ENCODE measurements at regions of chr2 and their contacts with region 1.

Region 1: DNA sequence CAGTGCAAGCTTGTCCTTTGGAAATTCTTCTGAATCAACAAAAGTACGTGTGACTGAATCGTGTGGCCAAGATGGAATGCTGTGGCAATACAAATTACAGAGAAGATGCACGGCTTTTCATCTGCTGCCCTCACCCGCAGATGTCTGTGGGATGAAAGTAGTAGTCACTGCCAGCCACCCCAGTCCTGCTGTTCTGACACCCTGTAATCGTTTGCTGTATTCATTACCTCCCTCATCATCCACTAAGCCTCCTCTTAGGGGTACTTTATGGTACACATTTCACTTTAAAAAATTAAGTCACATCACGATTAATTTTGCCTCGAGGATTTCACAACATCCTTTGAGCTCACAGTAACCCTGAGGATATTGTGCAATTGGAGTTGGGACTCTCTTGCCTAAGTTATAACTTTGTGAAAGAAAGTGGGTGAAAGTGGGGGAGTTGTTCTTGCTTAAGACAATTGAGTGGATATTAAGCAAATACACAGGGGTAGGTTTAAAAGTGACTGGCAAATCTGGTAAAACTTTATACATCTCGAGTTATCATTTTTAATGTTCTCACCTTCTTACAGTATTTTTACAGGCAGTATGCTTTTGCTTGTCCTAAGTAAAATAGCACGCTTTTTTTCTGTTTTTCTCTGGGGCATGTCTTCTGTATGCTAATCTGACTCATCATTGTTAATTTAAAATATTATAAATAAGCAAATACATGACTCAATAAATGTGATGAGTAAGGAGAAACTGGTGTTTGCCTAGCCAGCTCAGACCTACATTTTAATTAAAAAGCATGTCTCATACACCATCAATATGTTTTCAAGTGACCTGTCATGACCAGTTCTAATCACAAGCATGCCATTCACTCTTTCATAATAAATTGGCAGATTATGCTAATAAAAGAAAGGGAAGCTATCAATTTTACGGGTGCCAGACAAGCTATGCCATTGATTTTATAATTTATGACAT is 680.9 kb downstream of the IRS1 start:
- DNase-seq: peak; percentile 68
- H3K4me3 ChIP-seq: peak overlapping the region; percentile 33
- H3K27ac ChIP-seq: peak overlapping the region; percentile 78
- H3K27me3 ChIP-seq: no peaks in the 10 kb centered on the region
- CTCF ChIP-seq: no peak

Region 2: GRCh38 chr2:225889446-225889850 is 229.3 kb before region 1 on chr2:
- CTCF ChIA-PET with region 1: interaction called, 11 read pairs
- POLR2A ChIA-PET with region 1: no interaction called
- DNase-seq: peak; percentile 74
- H3K4me3 ChIP-seq: no peak overlapping the region
- H3K27ac ChIP-seq: no peak overlapping the region
- H3K27me3 ChIP-seq: no peaks in the 10 kb centered on the region
- CTCF ChIP-seq: peak; percentile 85

Region 3: DNA sequence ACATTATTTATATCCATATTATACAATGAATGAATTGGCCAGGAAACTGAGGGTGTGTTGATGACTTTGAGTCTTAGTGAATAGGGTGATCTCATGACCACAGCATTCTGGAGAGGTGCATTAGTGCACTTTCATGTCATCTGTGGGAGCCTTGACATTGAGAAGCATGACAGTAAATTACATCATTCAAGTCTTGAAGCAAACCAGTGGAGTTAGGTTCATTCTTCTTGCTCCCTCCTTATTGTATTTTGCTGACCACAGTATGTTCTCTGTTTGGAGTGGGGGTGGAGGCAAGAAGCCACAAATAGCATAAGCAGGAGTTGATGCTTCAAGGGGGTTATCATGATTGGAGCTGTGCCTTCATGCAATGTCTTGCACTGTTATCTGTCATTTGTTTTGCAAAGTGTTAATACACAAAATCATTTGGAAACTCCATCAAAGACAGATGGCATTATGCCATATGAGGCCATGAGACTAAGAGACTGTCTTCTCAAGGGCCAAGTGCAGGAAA is 39.0 kb before region 1 on chr2:
- CTCF ChIA-PET with region 1: no interaction called
- POLR2A ChIA-PET with region 1: interaction called, 11 read pairs
- DNase-seq: peak; percentile 86
- H3K4me3 ChIP-seq: no peak overlapping the region
- H3K27ac ChIP-seq: peak overlapping the region; percentile 86
- H3K27me3 ChIP-seq: no peaks in the 10 kb centered on the region
- CTCF ChIP-seq: no peak

Region 4: GRCh38 chr2:226139759-226140158 is 21.0 kb after region 1 on chr2:
- CTCF ChIA-PET with region 1: no interaction called
- POLR2A ChIA-PET with region 1: no interaction called
- DNase-seq: no peak
- H3K4me3 ChIP-seq: no peak overlapping the region
- H3K27ac ChIP-seq: no peak overlapping the region
- H3K27me3 ChIP-seq: no peaks in the 10 kb centered on the region
- CTCF ChIP-seq: no peak